Heart right ventricle (tissue), 16 donors: ENCODE measurements at regions of chr7 and their contacts with region 1.

Region 1: DNA sequence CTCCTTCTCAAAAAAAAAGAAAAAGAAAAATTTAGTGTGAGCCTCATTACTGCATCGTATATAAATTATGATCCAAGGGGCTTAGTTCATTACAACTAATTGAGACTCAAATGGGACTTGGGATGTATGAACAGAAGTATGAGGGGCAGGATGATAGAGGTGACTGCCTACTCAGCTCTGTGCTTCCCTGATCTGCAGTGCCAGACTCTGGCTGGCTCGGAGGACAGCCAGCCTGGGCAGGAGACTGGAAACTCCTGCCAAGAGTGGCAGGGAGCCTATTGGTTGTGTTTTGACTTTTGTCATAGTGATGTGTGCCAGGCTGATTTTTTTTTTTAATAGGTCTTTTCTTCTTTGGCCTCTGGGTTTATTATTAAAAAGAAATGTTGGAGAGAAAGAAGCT is 73.8 kb upstream of the GTF2IRD1 start:
- DNase-seq: peak; percentile 35 to 40
- ATAC-seq: peak; percentile 66 to 97 (median 90)
- H3K4me3 ChIP-seq: no peak overlapping the region
- H3K27ac ChIP-seq: no peak overlapping the region
- H3K4me1 ChIP-seq: peaks cover 0 to 7% (median 0%) of the 10 kb centered on the region in 9 donors
- H3K27me3 ChIP-seq: no peaks in the 10 kb centered on the region
- CTCF ChIP-seq: no peak

Region 2: GRCh38 chr7:74401137-74401859 is 21.4 kb after region 1 on chr7:
- intact Hi-C with region 1: no loop called
- DNase-seq: peak; percentile 65
- ATAC-seq: peak; percentile 36 to 81 (median 62)
- H3K4me3 ChIP-seq: no peak overlapping the region
- H3K27ac ChIP-seq: no peak overlapping the region
- H3K4me1 ChIP-seq: no peaks in the 10 kb centered on the region
- H3K27me3 ChIP-seq: no peaks in the 10 kb centered on the region
- CTCF ChIP-seq: peak; percentile 92 to 99 (median 96)

Region 3: DNA sequence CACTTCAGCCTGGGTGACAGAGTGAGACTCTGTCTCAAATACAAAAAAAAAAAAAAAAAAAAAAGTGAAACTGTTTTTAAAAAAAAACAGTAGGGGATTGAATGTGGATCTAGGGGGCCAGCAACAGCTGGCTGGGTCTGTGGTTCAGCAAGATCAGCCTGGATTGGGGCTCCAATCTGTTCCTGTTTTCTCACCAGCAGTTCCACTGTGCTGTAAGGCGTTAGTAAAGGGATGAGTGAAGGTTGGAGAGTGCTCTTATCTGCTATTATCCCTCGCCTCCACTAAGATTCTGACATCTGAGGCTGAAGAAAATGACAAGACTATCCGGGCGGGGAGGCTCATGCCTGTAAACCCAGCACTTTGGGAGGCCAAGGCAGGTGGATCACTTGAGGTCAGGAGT is 32.1 kb after region 1 on chr7:
- intact Hi-C with region 1: loop called in 1 of 10 experiments (anchors 1 kb)
- DNase-seq: no peak
- ATAC-seq: no peak
- H3K4me3 ChIP-seq: no peak overlapping the region
- H3K27ac ChIP-seq: no peak overlapping the region
- H3K4me1 ChIP-seq: no peaks in the 10 kb centered on the region
- H3K27me3 ChIP-seq: peaks cover 0 to 3% (median 0%) of the 10 kb centered on the region in 7 donors
- CTCF ChIP-seq: no peak